ENCODE measurements at regions of chr7 and their contacts with region 1.

Region 1: DNA sequence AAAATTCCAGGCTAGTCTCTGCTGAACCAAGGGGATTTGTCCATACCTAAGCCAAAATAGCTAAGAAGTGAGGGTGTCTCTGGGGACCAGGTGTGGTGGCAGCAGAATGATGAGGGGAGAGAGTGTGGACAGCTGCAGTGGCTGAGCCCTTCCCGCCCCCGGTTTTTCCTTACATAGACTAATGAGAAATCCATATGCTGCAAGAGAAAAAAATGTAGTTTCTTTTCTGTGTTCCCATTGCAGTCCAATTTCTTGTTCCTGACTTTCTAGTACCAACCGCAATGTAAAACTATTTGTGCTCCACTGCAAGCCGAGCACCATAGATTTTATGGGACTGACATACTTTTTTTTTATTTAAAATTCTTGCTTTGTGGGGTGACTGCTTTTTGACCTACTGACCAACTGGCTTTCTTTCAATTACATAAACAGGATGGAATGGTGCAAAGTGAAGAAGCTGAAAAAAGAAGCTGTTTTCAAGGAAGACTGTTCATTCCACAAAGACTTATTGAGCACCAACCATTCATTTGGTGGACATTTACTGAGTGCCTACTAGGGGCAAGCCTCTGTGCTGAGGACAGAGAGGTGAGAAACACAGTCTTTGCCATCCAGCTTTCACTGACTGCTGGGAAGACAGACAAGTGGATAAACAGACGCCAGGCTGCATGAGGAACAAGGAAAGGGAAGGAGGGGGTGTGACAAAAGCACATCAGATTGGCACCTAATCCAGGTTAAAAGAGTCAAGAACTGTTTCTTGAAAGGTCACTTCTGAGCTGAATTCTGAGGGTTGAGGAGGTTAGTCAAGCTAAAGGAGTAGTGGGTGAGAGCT is 9.8 kb downstream of the CEP41 start:
- DNase-seq: peak in 1 of 2 donors; percentile 52
- ATAC-seq: peak in 7 of 8 donors; percentile 29 to 86 (median 81)
- H3K4me3 ChIP-seq: peak overlapping the region in 6 of 10 donors; percentile 19 to 45 (median 30)
- H3K27ac ChIP-seq: peak overlapping the region in 9 of 10 donors; percentile 6 to 72 (median 56)
- H3K4me1 ChIP-seq: peaks cover 0 to 52% (median 27%) of the 10 kb centered on the region in 9 donors
- H3K27me3 ChIP-seq: no peaks in the 10 kb centered on the region
- CTCF ChIP-seq: no peak

Region 2: DNA sequence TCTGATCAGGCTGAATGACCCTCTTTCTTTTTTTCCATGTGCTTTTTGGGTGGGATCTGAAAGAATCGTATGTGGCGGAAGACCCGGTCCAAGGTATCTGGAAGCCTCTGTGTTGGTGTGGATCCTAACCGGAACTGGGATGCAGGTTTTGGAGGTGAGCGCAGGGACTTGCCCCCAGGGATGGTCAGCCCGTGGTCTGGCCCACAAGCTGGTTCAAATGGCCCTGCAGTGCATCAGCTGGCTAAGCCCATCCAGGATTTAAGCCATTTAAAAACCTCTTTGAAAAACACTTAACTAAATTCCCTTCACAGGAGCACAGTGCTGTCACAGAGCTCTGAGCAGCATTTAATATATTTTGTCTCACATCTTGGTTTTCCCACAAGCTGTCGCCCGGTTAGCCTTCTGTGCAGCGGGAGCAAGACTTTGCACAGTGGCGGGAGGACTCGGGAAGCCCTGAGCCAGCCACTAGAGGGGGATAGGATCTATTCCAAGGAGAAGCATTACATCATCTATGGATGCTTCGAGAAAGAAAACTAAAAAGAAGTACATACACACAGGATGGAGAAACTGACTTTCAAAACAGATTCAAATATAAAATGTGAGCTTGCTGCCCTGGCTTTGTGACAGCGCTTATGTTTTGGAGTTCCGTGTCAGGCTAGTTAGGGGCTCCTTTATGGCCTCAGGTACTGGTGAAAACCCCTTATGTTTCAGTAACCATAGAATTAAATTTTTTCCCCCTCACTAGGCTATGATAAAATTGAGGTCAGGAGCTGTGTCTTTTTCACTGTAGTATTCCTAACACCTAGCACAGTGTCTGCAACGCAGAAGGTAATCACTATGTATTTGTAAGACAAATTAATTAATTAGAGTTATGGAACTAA is 153.1 kb before region 1 on chr7:
- intact Hi-C with region 1: loop called in 1 of 10 experiments (anchors 10 kb)
- DNase-seq: peak; percentile 38 to 65
- ATAC-seq: peak; percentile 69 to 89 (median 80)
- H3K4me3 ChIP-seq: no peak overlapping the region
- H3K27ac ChIP-seq: no peak overlapping the region
- H3K4me1 ChIP-seq: peaks cover 0 to 27% (median 3%) of the 10 kb centered on the region in 9 donors
- H3K27me3 ChIP-seq: peaks cover 0 to 28% (median 16%) of the 10 kb centered on the region in 7 donors
- CTCF ChIP-seq: peak; percentile 23 to 79 (median 65)

Region 3: GRCh38 chr7:130356121-130356875 is 74.8 kb before region 1 on chr7:
- intact Hi-C with region 1: loop called in 2 of 10 experiments (anchors 10 kb)
- DNase-seq: peak; percentile 38 to 68
- ATAC-seq: peak; percentile 48 to 86 (median 71)
- H3K4me3 ChIP-seq: no peak overlapping the region
- H3K27ac ChIP-seq: peak overlapping the region in 9 of 10 donors; percentile 18 to 88 (median 77)
- H3K4me1 ChIP-seq: peaks cover 0 to 36% (median 22%) of the 10 kb centered on the region in 9 donors
- H3K27me3 ChIP-seq: no peaks in the 10 kb centered on the region
- CTCF ChIP-seq: no peak

Region 4: DNA sequence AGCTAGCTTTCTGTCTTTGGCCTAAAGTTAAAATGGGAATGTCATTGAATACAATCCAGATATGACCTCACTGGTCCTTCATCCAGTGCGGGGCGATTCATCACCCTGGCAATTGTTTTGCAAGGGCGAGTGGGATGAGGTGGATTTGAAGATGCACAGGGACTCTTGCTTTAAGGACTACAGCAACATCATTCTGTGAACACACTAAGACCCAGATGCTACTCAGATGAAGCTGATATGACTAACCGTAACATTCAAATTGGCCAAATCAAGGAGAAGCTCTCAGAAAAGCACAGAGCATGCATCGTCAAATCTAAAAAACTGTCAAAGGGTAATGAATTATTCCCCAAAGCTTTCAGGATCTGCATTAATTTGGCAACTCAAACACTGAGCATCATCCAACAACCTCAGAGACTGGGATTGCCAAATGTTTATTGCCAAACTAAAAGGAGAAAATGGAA is 37.9 kb before region 1 on chr7:
- intact Hi-C with region 1: no loop called
- DNase-seq: no peak
- ATAC-seq: peak in 7 of 8 donors; percentile 27 to 81 (median 51)
- H3K4me3 ChIP-seq: no peak overlapping the region
- H3K27ac ChIP-seq: peak overlapping the region in 4 of 10 donors; percentile 6 to 64 (median 44)
- H3K4me1 ChIP-seq: peaks cover 0 to 25% (median 6%) of the 10 kb centered on the region in 9 donors
- H3K27me3 ChIP-seq: no peaks in the 10 kb centered on the region
- CTCF ChIP-seq: no peak

Region 5: DNA sequence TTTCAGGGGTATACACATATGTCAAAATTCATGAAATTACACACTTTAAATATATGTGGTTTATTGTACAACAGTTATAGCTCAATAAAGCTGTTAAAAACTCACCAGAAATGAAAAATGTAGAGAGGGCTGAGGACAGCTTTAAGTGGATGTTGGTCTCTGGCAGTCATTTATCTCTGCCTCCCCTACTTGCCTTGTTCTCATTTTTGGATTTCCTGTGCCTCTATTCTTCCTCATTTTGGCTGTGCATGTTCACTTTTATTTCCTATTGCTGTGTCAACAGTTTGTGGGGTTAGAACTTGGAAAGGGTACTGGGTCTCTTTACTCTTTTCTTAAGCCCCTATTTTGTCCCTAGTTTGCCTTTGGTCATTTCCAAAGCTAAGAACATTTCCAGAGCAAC is 42.2 kb after region 1 on chr7:
- intact Hi-C with region 1: no loop called
- DNase-seq: no peak
- ATAC-seq: peak in 2 of 8 donors; percentile 16 to 25
- H3K4me3 ChIP-seq: no peak overlapping the region
- H3K27ac ChIP-seq: peak overlapping the region in 1 of 10 donors; percentile 67
- H3K4me1 ChIP-seq: peaks cover 0 to 10% (median 0%) of the 10 kb centered on the region in 9 donors
- H3K27me3 ChIP-seq: no peaks in the 10 kb centered on the region
- CTCF ChIP-seq: no peak

Region 6: GRCh38 chr7:130668257-130669084 is 237.4 kb after region 1 on chr7 and contains the start of gene COPG2:
- intact Hi-C with region 1: loop called in 1 of 10 experiments (anchors 5 kb)
- DNase-seq: peak; percentile 86 to 89
- ATAC-seq: peak; percentile 98 to 100 (median 99)
- H3K4me3 ChIP-seq: peak within 1 kb of the TSS; percentile 63 to 95 (median 76)
- H3K27ac ChIP-seq: peak within 1 kb of the TSS; percentile 75 to 94 (median 88)
- H3K4me1 ChIP-seq: peaks cover 0 to 37% (median 12%) of the 10 kb centered on the region in 9 donors
- H3K27me3 ChIP-seq: no peaks in the 10 kb centered on the region
- CTCF ChIP-seq: peak in 2 of 9 donors; percentile 9 to 24
- total RNA-seq, gene COPG2: 19.9 to 27.2 (median 23.3) TPM

Region 7: GRCh38 chr7:131007394-131008330 is 576.6 kb after region 1 on chr7:
- intact Hi-C with region 1: no loop called
- DNase-seq: peak in 1 of 2 donors; percentile 67
- ATAC-seq: peak; percentile 20 to 80 (median 70)
- H3K4me3 ChIP-seq: no peak overlapping the region
- H3K27ac ChIP-seq: peak overlapping the region in 9 of 10 donors; percentile 6 to 70 (median 46)
- H3K4me1 ChIP-seq: peaks cover 10 to 67% (median 59%) of the 10 kb centered on the region in 9 donors
- H3K27me3 ChIP-seq: no peaks in the 10 kb centered on the region
- CTCF ChIP-seq: peak in 7 of 9 donors; percentile 27 to 74 (median 69)